CD8-positive, alpha-beta memory T cell (primary cell): ENCODE measurements at regions of chr14 and their contacts with region 1.

Region 1: GRCh38 chr14:81220830-81221578 is at the start of gene GTF2A1:
- DNase-seq: peak; percentile 93 to 97 (median 95)
- H3K4me3 ChIP-seq: peak within 1 kb of the TSS; percentile 99
- H3K4me3 Mint-ChIP-seq: peak within 1 kb of the TSS; percentile 95 to 100 (median 100)
- H3K27ac ChIP-seq: peak within 1 kb of the TSS; percentile 100
- H3K27ac Mint-ChIP-seq: peak within 1 kb of the TSS; percentile 97 to 100 (median 100)
- H3K4me1 ChIP-seq: peaks cover 32% of the 10 kb centered on the region
- H3K4me1 Mint-ChIP-seq: peaks cover 33 to 46% (median 43%) of the 10 kb centered on the region in 3 donors
- H3K27me3 ChIP-seq: no peaks in the 10 kb centered on the region
- H3K27me3 Mint-ChIP-seq: peaks cover 0 to 10% of the 10 kb centered on the region in 2 donors
- total RNA-seq, gene GTF2A1: 49.4 TPM

Region 2: DNA sequence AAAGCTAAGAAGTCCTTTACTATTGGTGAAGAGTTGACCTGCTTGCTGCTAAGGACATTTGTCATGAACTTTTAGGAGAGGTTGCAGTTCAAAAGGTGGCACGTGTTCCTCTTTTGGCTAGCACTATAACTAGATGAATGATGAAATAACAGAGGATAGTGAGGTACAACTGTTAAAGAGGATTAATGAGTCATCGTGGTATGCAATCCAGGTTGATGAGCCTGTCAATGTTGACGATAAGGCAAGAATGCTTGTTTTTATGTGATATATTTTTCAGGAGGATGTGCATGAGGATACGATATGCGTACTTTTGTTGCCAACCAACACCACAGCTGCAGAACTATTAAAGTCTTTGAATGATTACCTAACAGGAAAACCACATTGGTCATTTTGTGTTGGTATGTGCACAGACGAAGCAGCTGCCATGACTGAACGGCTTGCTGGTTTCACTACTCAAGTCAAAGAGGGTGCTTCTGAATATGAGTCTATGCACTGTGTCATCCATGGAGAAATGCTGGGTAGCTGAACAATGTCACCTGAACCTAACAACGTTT is 290.1 kb before region 1 on chr14:
- CTCF ChIA-PET with region 1: interaction called, 4 read pairs
- POLR2A ChIA-PET with region 1: interaction called, 13 read pairs
- DNase-seq: peak in 3 of 5 donors; percentile 70 to 83 (median 80)
- H3K4me3 ChIP-seq: no peak overlapping the region
- H3K4me3 Mint-ChIP-seq: peak overlapping the region; percentile 2 to 70 (median 65)
- H3K27ac ChIP-seq: peak overlapping the region; percentile 33
- H3K27ac Mint-ChIP-seq: peak overlapping the region; percentile 70 to 98 (median 92)
- H3K4me1 ChIP-seq: peaks cover 24% of the 10 kb centered on the region
- H3K4me1 Mint-ChIP-seq: peaks cover 39 to 71% (median 68%) of the 10 kb centered on the region in 3 donors
- H3K27me3 ChIP-seq: no peaks in the 10 kb centered on the region
- H3K27me3 Mint-ChIP-seq: no peaks in the 10 kb centered on the region

Region 3: GRCh38 chr14:80941241-80942182 is 279.5 kb before region 1 on chr14 and contains the start of gene CEP128:
- CTCF ChIA-PET with region 1: no interaction called
- POLR2A ChIA-PET with region 1: interaction called, 10 read pairs
- DNase-seq: peak; percentile 51 to 86 (median 81)
- H3K4me3 ChIP-seq: peak within 1 kb of the TSS; percentile 68
- H3K4me3 Mint-ChIP-seq: peak within 1 kb of the TSS; percentile 80 to 96 (median 90)
- H3K27ac ChIP-seq: peak within 1 kb of the TSS; percentile 62
- H3K27ac Mint-ChIP-seq: peak within 1 kb of the TSS; percentile 86 to 99 (median 93)
- H3K4me1 ChIP-seq: peaks cover 9% of the 10 kb centered on the region
- H3K4me1 Mint-ChIP-seq: peaks cover 16 to 35% (median 21%) of the 10 kb centered on the region in 3 donors
- H3K27me3 ChIP-seq: no peaks in the 10 kb centered on the region
- H3K27me3 Mint-ChIP-seq: no peaks in the 10 kb centered on the region
- total RNA-seq, gene CEP128: 15.4 to 17.1 TPM

Region 4: GRCh38 chr14:80954687-80955299 is 266.2 kb before region 1 on chr14:
- CTCF ChIA-PET with region 1: no interaction called
- POLR2A ChIA-PET with region 1: interaction called, 10 read pairs
- DNase-seq: peak; percentile 58 to 79 (median 64)
- H3K4me3 ChIP-seq: peak overlapping the region; percentile 80
- H3K4me3 Mint-ChIP-seq: peak overlapping the region; percentile 84 to 93 (median 87)
- H3K27ac ChIP-seq: no peak overlapping the region
- H3K27ac Mint-ChIP-seq: peak overlapping the region in 5 of 8 donors; percentile 23 to 85 (median 75)
- H3K4me1 ChIP-seq: peaks cover 14% of the 10 kb centered on the region
- H3K4me1 Mint-ChIP-seq: peaks cover 35 to 51% (median 48%) of the 10 kb centered on the region in 3 donors
- H3K27me3 ChIP-seq: no peaks in the 10 kb centered on the region
- H3K27me3 Mint-ChIP-seq: peaks cover 0 to 2% of the 10 kb centered on the region in 2 donors

Region 5: GRCh38 chr14:81170104-81170828 is 50.7 kb before region 1 on chr14:
- CTCF ChIA-PET with region 1: interaction called, 9 read pairs
- POLR2A ChIA-PET with region 1: interaction called, 24 read pairs
- DNase-seq: peak; percentile 83 to 91 (median 88)
- H3K4me3 ChIP-seq: peak overlapping the region; percentile 84
- H3K4me3 Mint-ChIP-seq: peak overlapping the region; percentile 87 to 96 (median 94)
- H3K27ac ChIP-seq: peak overlapping the region; percentile 82
- H3K27ac Mint-ChIP-seq: peak overlapping the region; percentile 90 to 98 (median 96)
- H3K4me1 ChIP-seq: peaks cover 18% of the 10 kb centered on the region
- H3K4me1 Mint-ChIP-seq: peaks cover 27 to 30% (median 29%) of the 10 kb centered on the region in 3 donors
- H3K27me3 ChIP-seq: no peaks in the 10 kb centered on the region
- H3K27me3 Mint-ChIP-seq: no peaks in the 10 kb centered on the region

Region 6: DNA sequence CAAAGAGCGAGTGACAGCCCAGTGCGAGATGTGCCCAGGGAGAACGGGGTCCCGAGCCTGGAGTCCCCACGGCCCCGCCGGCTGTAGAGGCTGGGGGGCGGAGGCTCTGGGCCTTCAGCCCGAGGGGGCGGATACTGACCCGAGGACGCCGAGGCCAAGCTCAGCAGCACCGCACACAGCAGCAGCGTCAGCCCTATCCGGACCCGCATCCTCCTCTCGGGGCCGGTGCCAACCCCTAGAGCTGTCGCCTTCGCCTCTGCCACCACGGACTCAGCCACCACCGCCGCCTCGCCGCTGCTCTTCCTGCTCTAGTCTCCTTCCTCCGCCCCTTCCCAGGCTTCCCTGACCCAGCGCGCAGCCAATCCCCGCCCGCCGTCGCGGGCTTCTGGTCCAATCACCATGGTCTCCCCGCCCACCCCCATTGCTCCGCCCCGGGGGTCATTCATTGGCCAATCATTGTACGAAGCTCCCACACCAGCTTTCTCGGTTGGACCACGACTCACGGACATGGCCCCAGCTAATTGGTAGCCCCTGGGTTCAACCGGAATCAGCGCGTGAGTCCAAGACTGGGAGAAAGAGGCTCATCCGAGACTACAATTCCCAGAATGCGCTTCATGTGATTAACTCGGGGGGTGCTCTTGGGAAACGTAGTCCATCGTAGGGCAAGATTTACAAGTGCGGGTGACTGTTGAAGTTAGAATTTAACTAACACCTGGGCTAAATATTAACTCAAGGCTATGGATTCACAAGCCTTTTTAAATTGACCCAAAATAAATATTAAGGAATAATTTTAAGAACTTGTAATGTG is 312.7 kb after region 1 on chr14 and contains the start of gene SEL1L:
- CTCF ChIA-PET with region 1: no interaction called
- POLR2A ChIA-PET with region 1: interaction called, 12 read pairs
- DNase-seq: peak; percentile 99 to 100 (median 99)
- H3K4me3 ChIP-seq: peak within 1 kb of the TSS; percentile 79
- H3K4me3 Mint-ChIP-seq: peak within 1 kb of the TSS; percentile 95 to 99 (median 97)
- H3K27ac ChIP-seq: peak within 1 kb of the TSS; percentile 70
- H3K27ac Mint-ChIP-seq: peak within 1 kb of the TSS; percentile 69 to 99 (median 94)
- H3K4me1 ChIP-seq: peaks cover 50% of the 10 kb centered on the region
- H3K4me1 Mint-ChIP-seq: peaks cover 57 to 71% (median 67%) of the 10 kb centered on the region in 3 donors
- H3K27me3 ChIP-seq: no peaks in the 10 kb centered on the region
- H3K27me3 Mint-ChIP-seq: peaks cover 4 to 11% of the 10 kb centered on the region in 2 donors
- total RNA-seq, gene SEL1L: 61.4 to 64.8 TPM